ENCODE measurements at regions of chr5 and their contacts with region 1.

Region 1: DNA sequence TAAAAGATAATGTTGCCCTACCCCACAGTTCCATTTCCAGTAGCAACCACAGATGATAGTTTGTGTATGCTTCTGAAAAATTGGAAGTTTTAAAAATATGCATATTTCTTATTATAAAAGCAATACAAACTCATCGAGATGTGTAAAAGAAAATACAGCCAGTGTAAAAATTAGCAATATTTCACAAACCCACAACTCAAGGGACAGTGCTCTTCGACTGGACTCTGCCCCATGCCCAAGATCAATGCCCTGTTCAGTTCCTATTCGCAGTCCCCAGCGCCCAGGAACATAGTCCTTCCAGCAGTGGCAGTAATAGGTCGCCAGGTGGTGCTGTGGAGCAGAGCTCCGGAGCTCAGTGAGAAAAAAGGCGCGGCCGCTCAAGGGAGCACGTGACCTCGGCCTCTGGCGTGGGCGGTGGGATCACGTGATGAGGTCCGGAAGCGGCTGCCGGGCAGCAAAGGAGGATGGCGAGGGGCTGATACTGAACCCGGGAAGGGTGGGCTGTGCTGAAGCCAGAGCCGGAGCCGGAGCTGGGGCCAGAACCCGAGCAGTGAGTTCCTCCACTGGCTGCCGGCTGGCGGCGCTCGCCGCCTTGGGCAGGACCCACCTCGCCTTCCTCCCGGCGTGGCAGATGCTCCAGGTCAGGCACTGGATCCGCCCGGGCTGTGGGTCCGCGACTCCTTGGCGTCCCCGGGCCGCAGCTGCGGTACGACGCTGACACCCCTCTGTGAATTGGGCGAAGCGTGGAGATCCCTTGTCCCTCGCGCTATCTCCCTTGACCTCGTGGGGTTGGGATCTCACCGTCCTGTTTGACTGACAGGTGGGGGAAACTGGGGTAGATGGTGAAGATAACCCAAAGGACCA is at the start of gene SLC36A1:
- DNase-seq: peak; percentile 94
- ATAC-seq: peak; percentile 95
- H3K4me3 Mint-ChIP-seq: peak within 1 kb of the TSS; percentile 87
- H3K27ac Mint-ChIP-seq: peak within 1 kb of the TSS; percentile 89
- H3K4me1 Mint-ChIP-seq: peaks cover 24% of the 10 kb centered on the region
- H3K27me3 Mint-ChIP-seq: peaks cover 19% of the 10 kb centered on the region
- CTCF ChIP-seq: peak; percentile 88
- total RNA-seq, gene SLC36A1: 9.9 and 14.1 TPM in 2 replicates

Region 2: GRCh38 chr5:150517272-150518152 is 929.9 kb before region 1 on chr5:
- CTCF ChIA-PET with region 1: no interaction called
- POLR2A ChIA-PET with region 1: no interaction called
- intact Hi-C with region 1: no loop called
- DNase-seq: no peak
- ATAC-seq: no peak
- H3K4me3 Mint-ChIP-seq: no peak overlapping the region
- H3K27ac Mint-ChIP-seq: no peak overlapping the region
- H3K4me1 Mint-ChIP-seq: peaks cover 2% of the 10 kb centered on the region
- H3K27me3 Mint-ChIP-seq: no peaks in the 10 kb centered on the region
- CTCF ChIP-seq: no peak

Region 3: GRCh38 chr5:151427258-151427657 is 20.1 kb before region 1 on chr5:
- CTCF ChIA-PET with region 1: interaction called, 9 read pairs
- POLR2A ChIA-PET with region 1: interaction called, 13 read pairs
- intact Hi-C with region 1: loop called (anchors 1 kb)
- DNase-seq: peak; percentile 22
- ATAC-seq: peak; percentile 97
- H3K4me3 Mint-ChIP-seq: no peak overlapping the region
- H3K27ac Mint-ChIP-seq: peak overlapping the region; percentile 62
- H3K4me1 Mint-ChIP-seq: peaks cover 22% of the 10 kb centered on the region
- H3K27me3 Mint-ChIP-seq: peaks cover 14% of the 10 kb centered on the region
- CTCF ChIP-seq: no peak

Region 4: DNA sequence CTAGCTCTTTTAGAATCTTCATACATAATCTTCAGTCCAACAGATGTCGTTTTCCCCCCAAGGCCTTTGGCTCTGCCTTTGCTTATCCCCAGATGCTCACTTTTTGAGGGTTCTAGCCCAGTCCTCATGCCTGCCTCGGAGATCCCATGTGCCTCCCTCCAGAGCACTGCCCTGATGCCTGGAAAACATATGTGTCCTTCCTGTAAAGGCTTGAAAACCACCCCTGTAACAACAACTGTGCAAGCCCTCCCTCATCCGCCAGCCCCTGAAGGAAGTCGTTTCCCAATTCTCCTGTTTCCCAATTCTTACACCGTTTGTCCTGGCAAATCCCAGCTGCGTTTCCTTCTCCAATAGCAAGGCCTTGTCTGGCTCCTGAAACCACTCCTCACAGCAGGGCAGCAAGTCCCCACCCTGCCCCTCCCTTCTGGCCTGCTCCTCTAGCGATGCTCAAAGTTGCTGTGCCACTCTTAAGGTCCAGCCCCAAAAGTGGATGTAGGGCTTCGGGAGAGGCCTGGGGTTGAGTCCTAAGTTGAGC is 52.2 kb after region 1 on chr5:
- CTCF ChIA-PET with region 1: interaction called, 6 read pairs
- POLR2A ChIA-PET with region 1: no interaction called
- intact Hi-C with region 1: loop called (anchors 1 kb)
- DNase-seq: no peak
- ATAC-seq: no peak
- H3K4me3 Mint-ChIP-seq: no peak overlapping the region
- H3K27ac Mint-ChIP-seq: no peak overlapping the region
- H3K4me1 Mint-ChIP-seq: peaks cover 5% of the 10 kb centered on the region
- H3K27me3 Mint-ChIP-seq: no peaks in the 10 kb centered on the region
- CTCF ChIP-seq: no peak

Region 5: GRCh38 chr5:151651997-151652645 is 204.7 kb after region 1 on chr5:
- CTCF ChIA-PET with region 1: interaction called, 71 read pairs
- POLR2A ChIA-PET with region 1: interaction called, 14 read pairs
- intact Hi-C with region 1: loop called (anchors 1 kb)
- DNase-seq: peak; percentile 49
- ATAC-seq: peak; percentile 96
- H3K4me3 Mint-ChIP-seq: no peak overlapping the region
- H3K27ac Mint-ChIP-seq: no peak overlapping the region
- H3K4me1 Mint-ChIP-seq: no peaks in the 10 kb centered on the region
- H3K27me3 Mint-ChIP-seq: peaks cover 8% of the 10 kb centered on the region
- CTCF ChIP-seq: peak; percentile 36

Region 6: GRCh38 chr5:152142840-152143469 is 695.5 kb after region 1 on chr5:
- CTCF ChIA-PET with region 1: no interaction called
- POLR2A ChIA-PET with region 1: no interaction called
- intact Hi-C with region 1: loop called (anchors 1 kb)
- DNase-seq: peak; percentile 36
- ATAC-seq: peak; percentile 47
- H3K4me3 Mint-ChIP-seq: no peak overlapping the region
- H3K27ac Mint-ChIP-seq: no peak overlapping the region
- H3K4me1 Mint-ChIP-seq: no peaks in the 10 kb centered on the region
- H3K27me3 Mint-ChIP-seq: peaks cover 2% of the 10 kb centered on the region
- CTCF ChIP-seq: peak; percentile 81